H1 (cell line): ENCODE measurements at regions of chr5 and their contacts with region 1.

Region 1: DNA sequence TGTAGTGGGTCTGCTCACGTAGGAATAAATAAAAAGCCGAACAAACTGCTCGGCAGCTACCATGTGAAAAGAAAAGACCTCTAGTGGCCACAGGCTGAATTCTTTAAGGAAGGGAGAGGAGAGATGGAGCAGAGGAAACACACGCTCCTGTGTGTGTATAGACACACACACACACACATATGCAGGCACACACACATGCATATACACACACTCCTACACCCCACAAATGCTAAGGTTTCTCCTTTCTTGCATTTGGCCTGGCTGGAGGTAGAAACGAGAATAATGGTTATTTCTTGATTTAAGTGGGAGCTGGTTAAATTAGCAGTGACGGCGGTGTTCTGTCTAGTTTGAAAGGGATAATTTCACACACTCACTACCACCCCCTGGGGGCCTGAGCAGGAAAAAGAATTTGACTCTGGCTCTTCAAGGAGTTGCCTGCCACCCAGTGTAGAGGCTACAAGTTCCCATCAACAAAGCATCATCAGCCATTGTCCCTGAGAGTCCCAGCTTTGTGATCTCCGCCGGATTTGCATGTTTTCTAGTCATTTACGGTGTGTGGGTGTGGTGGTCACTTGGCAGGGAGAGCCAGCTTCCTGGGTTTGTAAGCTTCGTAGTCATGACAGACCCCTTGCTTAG is at the start of gene INSYN2B:
- DNase-seq: peak; percentile 77 to 89
- H3K4me3 ChIP-seq: peak within 1 kb of the TSS; percentile 23 to 55 (median 32); a peak in 6 of 8 replicates
- H3K27ac ChIP-seq: no peak within 1 kb of the TSS
- H3K4me1 ChIP-seq: peaks cover 10 to 30% (median 21%) of the 10 kb centered on the region in 4 experiments
- H3K27me3 ChIP-seq: peaks cover 1 to 14% (median 12%) of the 10 kb centered on the region in 4 experiments
- CTCF ChIP-seq: peak; percentile 25 to 98 (median 55)
- EP300 ChIP-seq: no peak
- POLR2A ChIP-seq: no peak
- RAD21 ChIP-seq: peak; percentile 61 to 73
- total RNA-seq, gene INSYN2B: not detected in 2 replicates

Region 2: DNA sequence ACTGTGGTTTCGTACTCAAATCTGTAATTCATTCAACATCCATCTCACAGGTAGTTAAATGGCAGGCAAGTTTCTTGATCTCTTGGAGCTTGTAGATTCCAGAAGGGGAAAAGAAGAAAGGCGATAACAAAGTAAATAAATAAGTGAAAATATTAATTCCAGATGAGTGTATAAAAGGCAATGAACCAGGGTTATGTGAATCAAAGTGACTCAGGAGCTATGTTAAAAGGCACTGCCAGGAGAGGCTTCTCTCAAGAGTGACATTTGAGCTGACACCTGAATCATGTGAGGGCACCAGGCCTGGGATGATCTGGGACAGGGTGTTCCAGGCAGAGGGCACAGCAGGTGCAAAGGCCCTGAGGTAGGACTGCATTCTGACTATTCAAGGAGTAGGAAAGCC is 298.5 kb before region 1 on chr5:
- CTCF ChIA-PET with region 1: interaction called, 11 read pairs
- POLR2A ChIA-PET with region 1: no interaction called
- DNase-seq: no peak
- H3K4me3 ChIP-seq: no peak overlapping the region
- H3K27ac ChIP-seq: no peak overlapping the region
- H3K4me1 ChIP-seq: no peaks in the 10 kb centered on the region
- H3K27me3 ChIP-seq: no peaks in the 10 kb centered on the region
- CTCF ChIP-seq: no peak
- EP300 ChIP-seq: no peak
- POLR2A ChIP-seq: no peak
- RAD21 ChIP-seq: no peak

Region 3: GRCh38 chr5:169795338-169795737 is 185.2 kb before region 1 on chr5:
- CTCF ChIA-PET with region 1: interaction called, 17 read pairs
- POLR2A ChIA-PET with region 1: no interaction called
- DNase-seq: no peak
- H3K4me3 ChIP-seq: no peak overlapping the region
- H3K27ac ChIP-seq: no peak overlapping the region
- H3K4me1 ChIP-seq: peaks cover 0 to 3% (median 0%) of the 10 kb centered on the region in 4 experiments; a peak in 2 of 7 replicates
- H3K27me3 ChIP-seq: no peaks in the 10 kb centered on the region
- CTCF ChIP-seq: peak; percentile 27 to 34 (median 33); a peak in 3 of 4 replicates
- EP300 ChIP-seq: no peak
- POLR2A ChIP-seq: no peak
- RAD21 ChIP-seq: peak; percentile 63 to 67

Region 4: GRCh38 chr5:169904059-169904458 is 76.5 kb before region 1 on chr5:
- CTCF ChIA-PET with region 1: interaction called, 17 read pairs
- POLR2A ChIA-PET with region 1: no interaction called
- DNase-seq: no peak
- H3K4me3 ChIP-seq: no peak overlapping the region
- H3K27ac ChIP-seq: no peak overlapping the region
- H3K4me1 ChIP-seq: peaks cover 0 to 6% (median 0%) of the 10 kb centered on the region in 4 experiments; a peak in 1 of 7 replicates
- H3K27me3 ChIP-seq: no peaks in the 10 kb centered on the region
- CTCF ChIP-seq: no peak
- EP300 ChIP-seq: no peak
- POLR2A ChIP-seq: no peak
- RAD21 ChIP-seq: no peak

Region 5: GRCh38 chr5:169920474-169920873 is 60.1 kb before region 1 on chr5:
- CTCF ChIA-PET with region 1: interaction called, 10 read pairs
- POLR2A ChIA-PET with region 1: no interaction called
- DNase-seq: no peak
- H3K4me3 ChIP-seq: no peak overlapping the region
- H3K27ac ChIP-seq: no peak overlapping the region
- H3K4me1 ChIP-seq: no peaks in the 10 kb centered on the region
- H3K27me3 ChIP-seq: no peaks in the 10 kb centered on the region
- CTCF ChIP-seq: no peak
- EP300 ChIP-seq: no peak
- POLR2A ChIP-seq: no peak
- RAD21 ChIP-seq: no peak

Region 6: DNA sequence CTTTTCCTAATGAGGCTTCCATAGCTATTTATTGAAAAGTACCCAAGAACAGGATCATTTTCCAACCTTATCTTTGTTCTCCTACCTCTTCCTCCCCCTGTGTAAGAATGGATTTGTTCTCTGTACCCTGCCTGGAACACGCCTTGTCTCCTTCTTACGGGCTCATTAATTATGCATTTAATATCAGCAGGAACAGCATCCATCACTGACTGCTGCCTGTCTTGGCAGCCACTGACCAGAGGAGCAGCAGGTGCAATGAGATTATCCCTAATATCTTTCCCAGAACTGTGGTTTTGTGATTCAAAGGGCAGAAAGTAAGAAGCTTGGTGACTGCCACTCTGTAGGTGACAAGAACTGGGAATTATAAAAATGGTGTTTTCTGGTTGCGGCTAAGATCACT is 19.1 kb after region 1 on chr5:
- CTCF ChIA-PET with region 1: interaction called, 27 read pairs
- POLR2A ChIA-PET with region 1: no interaction called
- DNase-seq: no peak
- H3K4me3 ChIP-seq: no peak overlapping the region
- H3K27ac ChIP-seq: no peak overlapping the region
- H3K4me1 ChIP-seq: no peaks in the 10 kb centered on the region
- H3K27me3 ChIP-seq: no peaks in the 10 kb centered on the region
- CTCF ChIP-seq: no peak
- EP300 ChIP-seq: no peak
- POLR2A ChIP-seq: no peak
- RAD21 ChIP-seq: no peak

Region 7: GRCh38 chr5:170132269-170132975 is 151.9 kb after region 1 on chr5:
- CTCF ChIA-PET with region 1: no interaction called
- POLR2A ChIA-PET with region 1: no interaction called
- DNase-seq: peak in 1 of 2 experiments; percentile 10
- H3K4me3 ChIP-seq: no peak overlapping the region
- H3K27ac ChIP-seq: no peak overlapping the region
- H3K4me1 ChIP-seq: no peaks in the 10 kb centered on the region
- H3K27me3 ChIP-seq: no peaks in the 10 kb centered on the region
- CTCF ChIP-seq: no peak
- EP300 ChIP-seq: no peak
- POLR2A ChIP-seq: no peak
- RAD21 ChIP-seq: no peak

Region 8: DNA sequence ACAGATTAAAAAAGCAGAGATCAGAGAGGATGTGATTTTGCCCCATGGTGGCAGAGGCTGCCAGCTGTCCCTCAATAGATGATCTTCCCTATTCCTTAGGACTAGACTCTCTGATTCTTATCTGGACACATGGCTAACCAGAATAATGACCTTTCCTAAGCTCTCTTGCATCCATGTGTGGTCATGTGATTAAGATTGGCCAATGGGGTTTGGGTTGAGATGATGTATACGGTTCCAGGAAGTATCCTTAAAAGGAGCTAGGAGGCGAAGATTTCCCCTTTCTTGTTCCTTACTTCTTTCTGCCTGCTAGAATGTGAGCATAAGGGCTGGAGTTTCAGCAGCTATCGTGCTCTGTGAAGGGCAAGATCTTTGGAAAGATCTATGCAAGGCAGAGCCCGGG is 164.9 kb after region 1 on chr5:
- CTCF ChIA-PET with region 1: no interaction called
- POLR2A ChIA-PET with region 1: no interaction called
- DNase-seq: peak in 1 of 2 experiments; percentile 26
- H3K4me3 ChIP-seq: no peak overlapping the region
- H3K27ac ChIP-seq: no peak overlapping the region
- H3K4me1 ChIP-seq: no peaks in the 10 kb centered on the region
- H3K27me3 ChIP-seq: no peaks in the 10 kb centered on the region; a peak in 1 of 7 replicates
- CTCF ChIP-seq: no peak
- EP300 ChIP-seq: no peak
- POLR2A ChIP-seq: no peak
- RAD21 ChIP-seq: no peak